ENCODE measurements at regions of chr20 and their contacts with region 1.

Region 1: DNA sequence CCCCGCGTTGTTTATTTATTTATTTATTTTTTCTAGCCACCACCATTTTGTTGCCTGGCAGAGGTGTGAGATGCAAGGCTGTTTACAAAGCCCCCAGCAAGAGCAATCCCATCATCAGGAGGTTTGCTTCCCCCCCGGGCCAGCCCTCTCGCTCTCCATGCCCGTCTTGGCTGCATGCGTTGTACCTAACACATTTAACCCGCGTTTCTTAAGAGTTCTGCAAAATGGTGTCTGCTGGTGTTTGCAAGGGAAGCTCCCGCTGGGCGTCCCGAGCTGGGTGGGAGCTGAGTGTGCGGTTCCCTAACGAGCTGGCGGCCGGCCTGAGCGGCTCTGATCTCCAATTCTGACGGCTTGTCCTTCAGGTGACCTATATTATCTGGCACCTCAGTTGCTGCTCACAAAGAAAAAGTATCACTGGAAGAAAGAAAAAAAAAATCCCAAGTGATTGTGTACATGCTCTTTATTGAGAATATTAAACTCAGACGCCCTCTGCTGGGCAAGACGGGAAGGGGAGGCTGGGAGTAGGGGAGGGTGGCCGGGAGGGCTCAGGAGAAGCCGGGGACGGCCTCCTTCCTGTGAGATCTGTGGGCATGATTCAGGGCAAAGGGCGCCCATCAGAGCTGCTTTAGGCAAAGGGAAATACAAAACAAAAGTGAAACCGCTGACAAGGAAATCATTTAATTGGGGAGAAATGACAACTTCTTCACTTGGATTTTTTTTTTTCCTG is 154.8 kb downstream of the BCAS1 start:
- DNase-seq: peak; percentile 96 to 98
- ATAC-seq: peak; percentile 87 to 96 (median 92)
- H3K4me3 ChIP-seq: peak overlapping the region; percentile 50 to 76 (median 64)
- H3K27ac ChIP-seq: peak overlapping the region; percentile 65 to 97 (median 89)
- H3K4me1 ChIP-seq: peaks cover 5 to 47% (median 33%) of the 10 kb centered on the region in 9 donors
- H3K27me3 ChIP-seq: no peaks in the 10 kb centered on the region
- CTCF ChIP-seq: peak; percentile 84 to 93 (median 92)

Region 2: DNA sequence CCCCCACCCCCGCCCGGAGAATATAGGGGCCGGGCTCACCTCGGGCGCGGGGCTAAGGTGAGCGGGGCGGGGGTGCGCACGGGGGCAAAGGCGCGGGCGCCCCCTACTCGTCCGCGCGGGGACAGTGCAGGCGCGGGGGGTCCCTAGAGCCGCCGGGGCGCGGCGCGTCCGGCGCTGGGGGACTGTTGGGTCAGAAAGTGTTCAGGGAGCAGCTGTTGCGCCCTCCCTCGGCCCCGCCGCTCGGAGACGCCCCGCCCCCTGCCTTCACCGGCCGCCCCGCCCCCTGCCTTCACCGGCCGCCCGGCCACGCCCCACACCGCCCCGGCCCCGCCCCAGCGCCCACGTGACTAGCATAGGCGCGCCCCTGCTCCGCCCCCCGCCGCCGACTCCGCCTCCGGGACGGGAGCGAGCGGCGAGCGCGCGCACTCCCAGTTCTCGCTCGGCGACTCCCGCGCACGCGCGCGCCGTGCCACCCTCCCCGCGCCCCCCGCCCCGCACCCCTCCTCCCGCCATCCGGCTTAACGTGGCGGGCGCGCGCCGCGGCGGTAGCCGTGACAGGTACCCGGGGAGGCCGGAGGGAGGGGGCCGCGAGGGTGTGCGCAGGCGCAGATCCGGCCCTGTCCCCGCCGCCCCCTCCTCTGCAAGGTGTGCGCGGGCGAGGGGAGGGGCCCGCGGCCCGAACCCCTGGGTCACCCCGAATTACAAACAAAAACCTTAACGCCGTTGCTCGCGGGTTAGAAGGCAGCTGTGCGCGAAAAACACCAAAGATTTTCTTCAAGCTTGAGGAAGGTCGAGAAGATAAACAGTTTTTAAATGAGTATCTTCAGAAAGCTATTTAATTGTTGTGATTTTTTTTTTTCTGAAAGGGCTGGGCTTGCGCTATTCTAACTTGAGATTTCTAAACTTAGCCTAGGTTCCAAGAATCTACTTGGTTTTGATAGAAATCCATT is 321.3 kb before region 1 on chr20:
- intact Hi-C with region 1: loop called in 1 of 10 experiments (anchors 5 kb)
- DNase-seq: peak; percentile 96 to 99
- ATAC-seq: peak; percentile 84 to 98 (median 92)
- H3K4me3 ChIP-seq: peak overlapping the region; percentile 76 to 98 (median 94)
- H3K27ac ChIP-seq: peak overlapping the region; percentile 97 to 100 (median 99)
- H3K4me1 ChIP-seq: peaks cover 0 to 64% (median 31%) of the 10 kb centered on the region in 9 donors
- H3K27me3 ChIP-seq: no peaks in the 10 kb centered on the region
- CTCF ChIP-seq: peak in 8 of 9 donors; percentile 14 to 57 (median 40)

Region 3: DNA sequence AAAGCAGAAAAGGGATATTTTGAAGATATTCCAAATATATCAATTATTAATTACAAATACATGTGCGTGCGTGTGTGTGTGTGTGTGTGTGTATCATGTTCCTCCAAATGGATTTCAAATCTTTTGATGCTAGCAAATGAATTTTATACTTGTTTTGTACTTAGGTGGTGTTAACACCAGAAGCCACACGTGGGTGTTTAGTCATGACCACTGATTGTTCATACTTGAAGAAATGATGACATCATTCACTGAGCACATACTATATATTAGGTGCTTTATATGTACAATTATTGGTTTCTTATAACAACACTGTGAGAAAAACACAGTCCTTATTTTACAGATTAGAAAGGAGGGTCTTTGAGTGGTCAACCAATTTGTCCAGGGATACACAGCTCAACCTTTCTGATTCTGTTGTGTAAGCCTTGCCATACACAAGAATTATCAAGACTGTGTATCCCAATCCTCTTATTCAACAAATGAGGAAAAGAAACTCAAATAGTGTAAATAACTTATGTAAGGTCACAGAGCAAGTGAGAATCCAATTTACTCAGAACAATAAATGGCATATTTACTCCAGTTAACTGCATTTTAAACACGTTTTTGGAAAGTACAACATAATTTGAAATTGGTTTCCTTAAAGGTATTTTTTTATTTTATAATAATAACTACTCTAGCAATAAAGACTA is 66.3 kb after region 1 on chr20:
- intact Hi-C with region 1: no loop called
- DNase-seq: no peak
- ATAC-seq: no peak
- H3K4me3 ChIP-seq: no peak overlapping the region
- H3K27ac ChIP-seq: no peak overlapping the region
- H3K4me1 ChIP-seq: peaks cover 0 to 8% (median 0%) of the 10 kb centered on the region in 9 donors
- H3K27me3 ChIP-seq: peaks cover 0 to 6% (median 3%) of the 10 kb centered on the region in 7 donors
- CTCF ChIP-seq: no peak